Head of caudate nucleus (tissue), 42 donors: ENCODE measurements at regions of chr11 and their contacts with region 1.

Region 1: GRCh38 chr11:87037450-87038234 is at the start of gene TMEM135:
- DNase-seq: peak; percentile 87 to 98 (median 95)

Region 2: DNA sequence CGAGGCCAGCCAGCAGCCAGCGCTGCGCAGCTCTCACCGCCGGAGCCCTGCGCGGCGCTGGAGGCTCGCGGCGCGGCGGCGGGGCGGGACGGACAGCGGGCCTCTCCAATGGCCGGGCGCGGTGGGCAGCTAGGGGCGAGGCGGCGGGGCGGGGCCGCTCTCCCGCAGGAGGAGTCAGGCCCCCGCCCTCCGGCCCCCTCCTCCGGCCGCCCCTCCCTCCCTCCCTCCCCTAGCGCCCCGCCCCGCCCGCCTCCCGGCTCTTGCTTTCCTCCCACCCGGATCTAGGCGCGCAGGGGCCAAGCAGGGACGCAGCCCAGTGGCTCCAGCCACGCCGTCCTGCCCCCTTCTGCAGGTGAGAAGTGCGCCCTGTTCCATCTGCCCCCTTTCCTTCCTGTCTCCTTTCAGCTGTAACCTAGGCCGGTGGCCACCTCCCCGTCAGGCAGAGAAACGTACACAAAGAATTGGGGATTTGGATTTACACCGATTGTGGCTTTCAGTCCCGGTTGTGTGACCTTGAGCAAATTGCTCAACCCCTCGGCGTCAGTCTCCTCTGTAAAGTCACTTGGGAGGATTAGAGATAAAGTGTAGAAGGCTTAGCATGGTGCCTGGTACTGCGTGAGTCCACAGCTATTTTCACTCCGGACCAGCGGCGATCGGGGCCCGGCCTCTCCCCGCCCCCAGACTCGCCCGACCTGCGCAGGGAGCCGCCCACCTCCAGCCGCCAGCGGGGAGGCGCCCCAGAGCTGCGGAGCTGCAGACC is 82.1 kb before region 1 on chr11 and contains the start of gene FZD4:
- intact Hi-C with region 1: loop called (anchors 2 kb)
- DNase-seq: peak; percentile 50 to 95 (median 88)